PC-9 (cell line): ENCODE measurements at regions of chr6 and their contacts with region 1.

Region 1: GRCh38 chr6:54846243-54846856 is at the start of gene FAM83B:
- DNase-seq: peak; percentile 54 to 70
- H3K4me3 ChIP-seq: peak within 1 kb of the TSS; percentile 73
- H3K27ac ChIP-seq: peak within 1 kb of the TSS; percentile 93
- H3K4me1 ChIP-seq: peaks cover 40% of the 10 kb centered on the region
- H3K27me3 ChIP-seq: no peaks in the 10 kb centered on the region
- CTCF ChIP-seq: no peak
- total RNA-seq, gene FAM83B: 10.1 and 15.6 TPM in 2 replicates

Region 2: DNA sequence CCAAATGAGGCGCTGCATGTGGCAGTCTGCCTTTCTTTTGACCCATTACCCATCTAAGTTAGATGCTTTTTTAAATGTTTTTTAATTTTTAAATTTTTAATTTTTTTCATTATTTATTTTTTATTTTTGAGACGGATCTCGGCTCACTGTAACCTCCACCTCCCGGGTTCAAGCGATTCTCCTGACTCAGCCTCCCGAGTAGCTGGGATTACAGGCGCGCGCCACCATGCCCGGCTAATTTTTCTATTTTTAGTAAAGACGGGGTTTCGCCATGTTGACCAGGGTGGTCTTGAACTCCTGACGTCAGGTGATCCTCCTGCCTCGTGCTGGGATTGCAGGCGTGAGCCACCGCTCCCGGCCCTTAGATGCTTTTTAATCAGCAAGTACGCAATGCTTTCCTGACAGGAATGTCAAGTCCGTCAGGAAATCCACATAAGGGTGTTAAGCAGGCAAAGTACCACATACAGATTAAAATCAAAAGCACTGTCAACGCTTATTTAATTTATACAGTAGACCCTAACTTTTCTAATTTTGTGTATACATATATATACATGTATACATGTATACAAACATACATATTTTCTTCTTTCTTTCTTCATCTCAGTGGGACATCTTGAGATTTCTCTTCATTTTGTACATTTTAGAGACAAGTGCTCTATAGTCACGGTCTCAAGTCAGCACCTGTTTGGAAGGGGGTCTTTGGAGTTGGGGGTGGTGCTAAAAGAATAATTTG is 1850.3 kb before region 1 on chr6:
- CTCF ChIA-PET with region 1: no interaction called
- POLR2A ChIA-PET with region 1: no interaction called
- intact Hi-C with region 1: no loop called
- DNase-seq: peak; percentile 42 to 74
- H3K4me3 ChIP-seq: peak overlapping the region; percentile 57
- H3K27ac ChIP-seq: no peak overlapping the region
- H3K4me1 ChIP-seq: peaks cover 25% of the 10 kb centered on the region
- H3K27me3 ChIP-seq: no peaks in the 10 kb centered on the region
- CTCF ChIP-seq: no peak

Region 3: GRCh38 chr6:53869952-53870351 is 976.4 kb before region 1 on chr6:
- CTCF ChIA-PET with region 1: no interaction called
- POLR2A ChIA-PET with region 1: no interaction called
- intact Hi-C with region 1: no loop called
- DNase-seq: peak in 1 of 2 experiments; percentile 24
- H3K4me3 ChIP-seq: no peak overlapping the region
- H3K27ac ChIP-seq: no peak overlapping the region
- H3K4me1 ChIP-seq: no peaks in the 10 kb centered on the region
- H3K27me3 ChIP-seq: no peaks in the 10 kb centered on the region
- CTCF ChIP-seq: no peak

Region 4: DNA sequence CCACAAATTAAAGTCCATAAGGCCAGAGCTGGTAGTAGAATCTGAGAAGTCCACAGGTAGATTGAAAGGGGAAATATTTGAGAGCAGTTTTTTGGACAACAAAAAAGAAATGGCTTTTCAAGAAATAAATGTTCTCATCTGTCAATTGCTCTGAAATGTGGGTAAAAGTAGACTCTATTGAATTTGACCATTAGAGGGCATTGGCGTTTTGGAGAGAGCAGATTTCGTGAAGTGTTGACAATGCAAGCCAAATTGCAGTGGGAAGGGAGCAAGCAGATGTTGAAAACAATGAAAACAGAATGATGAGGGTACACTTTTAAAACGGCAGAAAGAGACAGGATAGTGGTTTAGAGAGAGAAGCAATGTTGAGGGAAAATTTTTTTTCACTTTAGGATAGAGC is 148.9 kb before region 1 on chr6:
- CTCF ChIA-PET with region 1: no interaction called
- POLR2A ChIA-PET with region 1: interaction called, 5 read pairs
- intact Hi-C with region 1: loop called (anchors 5 kb)
- DNase-seq: no peak
- H3K4me3 ChIP-seq: no peak overlapping the region
- H3K27ac ChIP-seq: no peak overlapping the region
- H3K4me1 ChIP-seq: peaks cover 22% of the 10 kb centered on the region
- H3K27me3 ChIP-seq: no peaks in the 10 kb centered on the region
- CTCF ChIP-seq: no peak; the same call in 1 of the 2 replicates

Region 5: DNA sequence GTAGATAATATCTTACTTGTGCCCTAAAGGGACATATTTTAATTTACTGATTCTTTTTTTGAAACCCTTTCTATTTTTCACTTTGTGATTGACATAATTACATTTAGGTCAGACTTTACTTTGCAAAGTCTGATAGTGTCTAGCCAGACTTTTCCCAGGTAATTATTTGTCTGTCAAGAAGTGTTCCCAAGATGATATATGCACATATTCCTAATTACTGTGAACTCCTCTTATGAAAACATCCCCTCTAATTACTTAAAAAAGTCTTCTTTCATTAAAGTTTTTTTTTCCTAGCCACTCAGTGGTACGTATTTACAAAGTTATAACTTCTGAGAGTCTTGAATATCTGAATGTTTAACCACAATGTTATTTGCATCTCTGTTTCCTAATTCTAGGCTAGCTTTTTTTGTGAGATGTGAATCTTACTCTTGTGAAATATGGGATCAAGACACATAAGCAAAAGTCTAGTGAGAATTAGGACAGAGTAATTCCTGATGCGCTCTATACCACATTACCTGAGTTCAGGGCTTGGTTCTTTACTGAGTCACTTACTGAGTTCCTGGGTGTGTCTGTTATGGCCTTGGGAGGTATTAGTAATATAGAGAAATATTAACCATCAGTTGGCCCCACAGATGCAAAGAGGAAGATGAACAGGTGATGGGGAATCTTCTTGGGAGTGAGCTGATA is 28.1 kb after region 1 on chr6:
- CTCF ChIA-PET with region 1: no interaction called
- POLR2A ChIA-PET with region 1: no interaction called
- intact Hi-C with region 1: loop called (anchors 1 kb)
- DNase-seq: peak in 1 of 2 experiments; percentile 87
- H3K4me3 ChIP-seq: no peak overlapping the region
- H3K27ac ChIP-seq: peak overlapping the region; percentile 81
- H3K4me1 ChIP-seq: peaks cover 32% of the 10 kb centered on the region
- H3K27me3 ChIP-seq: no peaks in the 10 kb centered on the region
- CTCF ChIP-seq: no peak

Region 6: DNA sequence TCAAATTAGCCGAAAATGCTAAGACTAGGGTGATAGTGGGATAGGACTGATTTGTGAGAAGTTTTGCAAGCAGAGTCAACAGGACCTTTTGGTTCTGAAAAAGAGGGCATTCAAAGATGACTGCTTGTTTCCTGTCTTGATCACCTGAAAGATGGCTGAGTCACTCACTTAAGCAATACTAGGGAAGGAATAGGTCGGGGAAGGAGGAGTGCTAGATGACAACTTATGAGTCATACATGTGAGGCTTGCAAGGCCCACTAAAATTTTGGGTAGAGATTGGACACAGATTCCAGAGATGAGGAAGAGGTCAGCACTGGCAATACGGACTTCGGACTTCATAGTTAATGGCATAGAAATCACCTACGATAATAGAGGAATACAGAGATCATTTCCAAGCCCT is 89.4 kb after region 1 on chr6:
- CTCF ChIA-PET with region 1: no interaction called
- POLR2A ChIA-PET with region 1: no interaction called
- intact Hi-C with region 1: loop called (anchors 2 kb)
- DNase-seq: peak; percentile 40 to 88
- H3K4me3 ChIP-seq: no peak overlapping the region
- H3K27ac ChIP-seq: peak overlapping the region; percentile 77
- H3K4me1 ChIP-seq: peaks cover 19% of the 10 kb centered on the region
- H3K27me3 ChIP-seq: no peaks in the 10 kb centered on the region
- CTCF ChIP-seq: no peak

Region 7: DNA sequence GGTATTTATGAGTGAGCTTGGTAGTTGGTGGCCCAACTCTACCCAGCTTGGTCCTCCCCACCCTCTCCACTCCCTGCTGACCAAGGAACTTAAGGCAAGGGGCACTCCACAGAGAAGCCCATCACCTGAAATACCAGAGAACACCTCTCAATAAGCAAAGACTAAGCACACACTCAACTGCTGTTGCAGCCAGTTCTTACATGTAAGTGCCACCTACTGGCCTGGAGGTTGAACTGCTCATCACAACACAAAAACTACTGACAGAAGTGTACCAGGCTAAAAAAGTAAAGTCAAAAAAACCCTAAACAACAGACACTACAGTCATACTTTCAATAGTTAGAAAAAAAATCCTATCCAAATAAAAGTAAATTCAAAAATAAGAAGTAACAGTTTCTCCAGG is 146.4 kb after region 1 on chr6:
- CTCF ChIA-PET with region 1: no interaction called
- POLR2A ChIA-PET with region 1: no interaction called
- intact Hi-C with region 1: loop called (anchors 5 kb)
- DNase-seq: no peak
- H3K4me3 ChIP-seq: no peak overlapping the region
- H3K27ac ChIP-seq: no peak overlapping the region
- H3K4me1 ChIP-seq: no peaks in the 10 kb centered on the region
- H3K27me3 ChIP-seq: no peaks in the 10 kb centered on the region
- CTCF ChIP-seq: peak; percentile 79

Region 8: DNA sequence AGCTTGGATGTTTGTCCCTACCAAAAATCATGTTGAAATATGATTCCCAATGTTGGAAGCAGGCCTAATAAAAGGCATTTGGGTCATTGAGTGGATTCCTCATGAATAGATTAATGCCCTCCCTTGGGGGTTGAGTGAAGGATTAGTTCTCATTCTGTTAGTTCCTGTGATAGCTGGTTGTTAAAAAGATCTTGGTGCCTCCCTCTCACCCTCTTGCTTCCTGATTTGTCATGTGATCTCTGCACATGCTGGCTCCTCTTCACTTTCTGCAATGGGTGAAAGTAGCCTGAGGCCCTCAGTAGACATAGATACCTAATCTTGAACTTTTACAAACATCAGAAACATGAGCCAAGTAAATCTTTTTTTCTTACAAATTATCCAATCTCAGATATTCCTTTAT is 212.4 kb after region 1 on chr6:
- CTCF ChIA-PET with region 1: no interaction called
- POLR2A ChIA-PET with region 1: no interaction called
- intact Hi-C with region 1: loop called (anchors 10 kb)
- DNase-seq: no peak
- H3K4me3 ChIP-seq: no peak overlapping the region
- H3K27ac ChIP-seq: no peak overlapping the region
- H3K4me1 ChIP-seq: no peaks in the 10 kb centered on the region
- H3K27me3 ChIP-seq: no peaks in the 10 kb centered on the region
- CTCF ChIP-seq: no peak

Region 9: GRCh38 chr6:55131616-55132015 is 285.3 kb after region 1 on chr6:
- CTCF ChIA-PET with region 1: no interaction called
- POLR2A ChIA-PET with region 1: no interaction called
- intact Hi-C with region 1: no loop called
- DNase-seq: no peak
- H3K4me3 ChIP-seq: no peak overlapping the region
- H3K27ac ChIP-seq: no peak overlapping the region
- H3K4me1 ChIP-seq: no peaks in the 10 kb centered on the region
- H3K27me3 ChIP-seq: no peaks in the 10 kb centered on the region
- CTCF ChIP-seq: no peak